Lower leg skin (tissue), 4 donors: ENCODE measurements at regions of chr19 and their contacts with region 1.

Region 1: GRCh38 chr19:18450931-18451845 is 13.3 kb upstream of the ISYNA1 start:
- DNase-seq: peak; percentile 81 to 97
- H3K4me3 ChIP-seq: no peak overlapping the region
- CTCF ChIP-seq: peak in 2 of 3 donors; percentile 28 to 94
- POLR2A ChIP-seq: no peak

Region 2: DNA sequence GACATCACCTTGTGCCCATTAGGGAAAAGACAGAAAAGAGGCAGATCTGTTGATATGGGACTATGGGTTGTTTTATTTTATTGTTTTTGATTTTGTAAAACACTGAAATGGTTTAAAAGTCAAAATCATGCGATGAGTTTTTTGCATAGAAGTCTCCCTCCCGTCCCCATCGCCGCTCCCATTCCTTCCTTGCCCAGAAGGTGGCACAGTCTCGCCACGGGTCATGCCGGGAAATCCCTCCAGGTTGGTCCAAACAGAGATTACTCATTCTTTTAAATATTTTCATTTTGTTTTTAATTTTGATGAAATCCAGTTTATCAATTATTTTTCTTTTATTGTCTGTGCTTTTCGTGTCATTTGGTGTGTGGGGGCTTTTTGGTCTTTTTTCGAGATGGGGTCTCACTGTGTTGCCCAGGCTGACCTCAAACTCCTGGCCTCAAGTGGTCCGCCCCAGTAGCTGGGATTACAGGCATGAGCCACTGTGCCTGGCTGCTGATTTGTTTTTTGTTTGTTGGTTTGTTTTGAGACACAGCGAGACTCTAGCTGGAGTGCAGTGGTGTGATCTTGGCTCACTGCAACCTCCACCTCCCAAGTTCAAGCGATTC is 101.6 kb before region 1 on chr19:
- intact Hi-C with region 1: no loop called
- DNase-seq: peak in 1 of 2 donors; percentile 92
- H3K4me3 ChIP-seq: no peak overlapping the region
- CTCF ChIP-seq: no peak
- POLR2A ChIP-seq: no peak

Region 3: GRCh38 chr19:18496167-18496979 is 45.2 kb after region 1 on chr19:
- intact Hi-C with region 1: no loop called
- DNase-seq: no peak
- H3K4me3 ChIP-seq: no peak overlapping the region
- CTCF ChIP-seq: no peak
- POLR2A ChIP-seq: no peak

Region 4: DNA sequence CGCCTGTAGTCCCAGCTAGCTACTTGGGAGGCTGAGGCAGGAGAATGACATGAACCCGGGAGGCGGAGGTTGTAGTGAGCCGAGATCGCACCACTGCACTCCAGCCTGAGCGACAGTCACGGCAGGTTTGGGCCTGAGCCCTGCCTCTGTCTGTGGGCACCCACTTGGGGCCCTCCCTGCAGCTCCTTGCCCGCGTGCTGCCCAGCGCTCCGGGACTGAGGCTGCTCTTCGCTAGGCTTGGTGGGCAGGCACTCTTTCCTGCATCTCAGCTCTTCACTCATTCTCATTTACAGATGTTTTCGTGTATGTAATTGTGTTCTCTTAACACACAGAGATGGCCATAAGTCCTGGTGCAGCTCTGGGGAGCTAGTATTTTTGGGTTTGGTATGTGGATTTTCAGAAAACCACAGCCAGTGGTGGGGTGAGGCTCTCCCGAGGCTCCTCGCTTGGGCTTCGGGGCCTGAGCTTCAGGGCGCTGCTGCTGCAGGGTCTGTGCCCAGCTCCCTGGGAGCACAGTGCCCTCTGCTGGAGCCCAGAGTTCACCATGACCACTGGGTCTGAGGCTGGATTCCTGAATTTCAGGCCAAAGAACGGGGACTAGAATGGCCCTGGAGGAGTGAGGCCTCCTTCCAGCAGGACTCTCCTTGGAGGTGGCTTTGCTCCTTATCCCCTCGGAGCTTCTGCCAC is 395.8 kb after region 1 on chr19:
- intact Hi-C with region 1: loop called (anchors 10 kb)
- DNase-seq: peak; percentile 62 to 95
- H3K4me3 ChIP-seq: no peak overlapping the region
- CTCF ChIP-seq: peak in 1 of 3 donors; percentile 14
- POLR2A ChIP-seq: no peak